Tibial artery (tissue), 4 donors: ENCODE measurements at regions of chr13 and their contacts with region 1.

Region 1: DNA sequence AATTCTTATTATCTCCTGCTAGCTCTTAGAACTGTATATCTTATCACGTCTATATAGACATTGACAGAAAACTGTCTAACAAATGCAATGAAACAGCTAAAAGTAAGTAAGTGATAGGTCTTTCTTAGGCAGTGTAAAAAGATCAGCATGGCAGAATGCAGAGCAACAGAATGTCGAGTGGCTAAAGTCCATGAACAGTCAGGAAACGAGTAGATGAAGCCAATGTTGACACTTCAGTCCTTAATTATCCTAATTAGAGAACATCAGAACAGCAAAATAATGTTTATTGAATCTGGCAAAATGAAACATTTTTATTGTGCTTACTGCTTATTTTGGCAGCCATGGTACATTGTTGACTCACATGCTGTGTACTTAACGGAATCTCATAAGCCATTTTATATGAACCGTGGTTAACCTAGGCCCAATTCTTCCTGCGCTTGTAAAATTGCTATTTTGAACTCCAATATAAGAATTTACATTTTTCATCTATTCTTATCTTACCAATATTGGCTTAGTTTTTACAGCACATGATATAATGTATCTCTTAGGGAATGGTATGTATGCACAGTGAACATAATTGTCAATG is 748.1 kb downstream of the DACH1 start:
- DNase-seq: no peak
- H3K4me3 ChIP-seq: no peak overlapping the region
- H3K27ac ChIP-seq: no peak overlapping the region
- H3K4me1 ChIP-seq: no peaks in the 10 kb centered on the region
- H3K27me3 ChIP-seq: no peaks in the 10 kb centered on the region
- CTCF ChIP-seq: no peak

Region 2: GRCh38 chr13:70237131-70237530 is 881.7 kb before region 1 on chr13:
- intact Hi-C with region 1: no loop called
- DNase-seq: no peak
- H3K4me3 ChIP-seq: no peak overlapping the region
- H3K27ac ChIP-seq: no peak overlapping the region
- H3K4me1 ChIP-seq: no peaks in the 10 kb centered on the region
- H3K27me3 ChIP-seq: no peaks in the 10 kb centered on the region
- CTCF ChIP-seq: no peak

Region 3: GRCh38 chr13:71005919-71006318 is 113.0 kb before region 1 on chr13:
- intact Hi-C with region 1: loop called (anchors 5 kb)
- DNase-seq: no peak
- H3K4me3 ChIP-seq: no peak overlapping the region
- H3K27ac ChIP-seq: no peak overlapping the region
- H3K4me1 ChIP-seq: no peaks in the 10 kb centered on the region
- H3K27me3 ChIP-seq: no peaks in the 10 kb centered on the region
- CTCF ChIP-seq: no peak

Region 4: DNA sequence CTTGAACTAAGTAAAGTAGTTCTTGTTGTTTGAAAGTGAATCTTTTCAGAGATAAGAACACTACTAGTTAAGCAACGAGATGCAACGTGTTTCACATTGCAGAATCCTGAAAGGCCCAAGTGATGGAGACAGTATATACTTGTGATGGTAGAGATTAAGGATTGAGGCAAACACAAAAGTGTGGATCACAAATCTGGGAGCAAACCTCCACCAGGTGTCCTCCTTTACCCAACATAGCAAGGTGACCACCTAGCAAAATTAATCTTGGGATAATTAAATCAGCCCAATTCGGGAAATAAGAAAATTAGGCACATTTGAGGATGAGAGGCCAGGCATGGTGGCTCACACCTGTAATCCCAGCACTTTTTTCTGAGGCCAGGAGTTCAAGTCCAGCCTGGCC is 184.3 kb after region 1 on chr13:
- intact Hi-C with region 1: no loop called
- DNase-seq: no peak
- H3K4me3 ChIP-seq: no peak overlapping the region
- H3K27ac ChIP-seq: no peak overlapping the region
- H3K4me1 ChIP-seq: no peaks in the 10 kb centered on the region
- H3K27me3 ChIP-seq: no peaks in the 10 kb centered on the region
- CTCF ChIP-seq: no peak